Right ventricle myocardium superior (tissue), 1 donor: ENCODE measurements at regions of chr3 and their contacts with region 1.

Region 1: DNA sequence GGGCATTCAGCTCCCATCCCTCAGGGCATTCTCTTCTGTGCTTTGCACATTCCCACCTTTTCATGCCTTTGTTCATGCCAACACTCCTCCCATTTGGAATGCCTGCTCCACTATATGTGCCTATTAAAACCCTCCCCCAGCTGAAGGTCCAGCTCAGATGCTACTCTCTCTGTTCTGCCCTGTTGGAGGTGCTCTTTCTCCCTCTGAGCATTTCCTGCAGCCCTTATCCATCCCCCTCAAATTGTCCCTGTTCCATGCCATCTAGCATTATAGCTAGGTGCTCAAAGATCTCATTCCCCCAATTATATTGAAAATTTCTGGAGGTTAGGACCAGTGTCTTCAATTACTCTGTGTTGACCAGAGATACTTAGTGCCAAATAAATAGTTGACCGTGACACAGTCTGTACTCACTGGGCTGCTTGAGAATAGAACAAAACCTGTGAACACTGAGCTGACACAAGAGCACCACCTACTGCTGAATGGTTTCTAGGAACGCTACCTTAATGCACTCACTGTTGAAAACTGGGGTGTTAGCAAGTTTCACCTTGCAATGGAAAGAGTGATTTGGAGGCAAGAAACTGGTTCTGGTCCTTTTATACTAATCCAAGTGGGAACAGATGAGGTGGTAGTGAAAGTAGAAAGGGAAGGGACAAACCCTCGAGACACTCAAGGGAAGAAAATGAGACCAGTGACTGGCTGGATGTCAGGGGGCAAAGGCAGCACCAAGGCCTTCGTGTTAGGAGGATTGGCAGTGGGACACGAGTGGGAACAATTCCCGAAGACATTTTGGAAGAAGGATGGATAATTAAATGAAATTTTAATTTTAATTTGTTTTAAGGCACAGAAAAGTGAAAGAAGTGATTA is 289.8 kb upstream of the ROPN1 start:
- DNase-seq: no peak
- ATAC-seq: peak; percentile 70

Region 2: GRCh38 chr3:124014366-124014942 is 267.2 kb before region 1 on chr3:
- intact Hi-C with region 1: loop called (anchors 5 kb)
- DNase-seq: no peak
- ATAC-seq: no peak

Region 3: GRCh38 chr3:124032648-124033359 is 248.9 kb before region 1 on chr3:
- intact Hi-C with region 1: loop called (anchors 5 kb)
- DNase-seq: peak; percentile 90
- ATAC-seq: peak; percentile 98